ENCODE measurements at regions of chr1 and their contacts with region 1.

Region 1: DNA sequence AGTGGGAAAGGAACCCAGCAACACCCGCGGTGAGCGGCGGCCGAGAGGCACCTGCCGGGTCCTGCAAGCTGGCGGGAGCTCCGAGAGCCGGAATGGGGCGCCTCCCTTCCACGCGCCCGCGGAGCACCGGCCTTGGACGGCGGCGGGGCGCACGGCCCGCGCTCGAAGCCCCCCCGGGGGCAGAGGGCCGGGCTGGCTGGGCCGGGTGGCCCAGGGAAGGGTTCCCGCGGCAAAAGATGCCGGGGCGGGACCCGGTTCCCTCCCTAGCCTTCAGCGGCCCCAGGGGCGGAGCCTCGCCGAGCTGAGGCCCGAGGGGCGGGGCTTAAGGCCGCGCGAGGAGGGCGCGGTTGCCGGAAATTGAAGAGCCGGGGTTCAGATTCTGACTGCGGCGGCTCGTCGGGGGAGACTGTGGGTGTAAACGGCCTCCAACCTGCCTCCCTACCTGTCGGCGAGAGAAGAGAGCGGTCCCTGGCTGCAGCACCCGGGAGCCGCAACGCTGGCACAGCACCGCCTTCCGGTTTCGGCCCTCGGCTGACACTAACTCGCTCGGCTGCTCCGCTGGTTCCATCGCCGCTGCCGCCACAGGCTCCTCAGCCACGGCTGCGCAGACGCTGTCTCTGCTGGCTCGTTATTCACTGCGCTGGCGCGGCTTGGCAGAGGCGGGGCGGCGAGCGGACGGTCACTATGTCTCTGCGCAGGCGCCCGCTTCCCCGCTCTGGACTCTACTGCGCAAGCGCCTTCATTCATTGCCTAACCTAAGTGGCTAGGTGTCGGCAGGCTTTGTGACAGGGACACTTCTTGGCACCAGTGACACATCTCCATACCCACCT is at the start of gene RABIF:
- H3K4me3 ChIP-seq: peak within 1 kb of the TSS; percentile 89
- H3K27ac ChIP-seq: peak within 1 kb of the TSS; percentile 79
- H3K4me1 ChIP-seq: no peaks in the 10 kb centered on the region
- CTCF ChIP-seq: peak; percentile 83

Region 2: DNA sequence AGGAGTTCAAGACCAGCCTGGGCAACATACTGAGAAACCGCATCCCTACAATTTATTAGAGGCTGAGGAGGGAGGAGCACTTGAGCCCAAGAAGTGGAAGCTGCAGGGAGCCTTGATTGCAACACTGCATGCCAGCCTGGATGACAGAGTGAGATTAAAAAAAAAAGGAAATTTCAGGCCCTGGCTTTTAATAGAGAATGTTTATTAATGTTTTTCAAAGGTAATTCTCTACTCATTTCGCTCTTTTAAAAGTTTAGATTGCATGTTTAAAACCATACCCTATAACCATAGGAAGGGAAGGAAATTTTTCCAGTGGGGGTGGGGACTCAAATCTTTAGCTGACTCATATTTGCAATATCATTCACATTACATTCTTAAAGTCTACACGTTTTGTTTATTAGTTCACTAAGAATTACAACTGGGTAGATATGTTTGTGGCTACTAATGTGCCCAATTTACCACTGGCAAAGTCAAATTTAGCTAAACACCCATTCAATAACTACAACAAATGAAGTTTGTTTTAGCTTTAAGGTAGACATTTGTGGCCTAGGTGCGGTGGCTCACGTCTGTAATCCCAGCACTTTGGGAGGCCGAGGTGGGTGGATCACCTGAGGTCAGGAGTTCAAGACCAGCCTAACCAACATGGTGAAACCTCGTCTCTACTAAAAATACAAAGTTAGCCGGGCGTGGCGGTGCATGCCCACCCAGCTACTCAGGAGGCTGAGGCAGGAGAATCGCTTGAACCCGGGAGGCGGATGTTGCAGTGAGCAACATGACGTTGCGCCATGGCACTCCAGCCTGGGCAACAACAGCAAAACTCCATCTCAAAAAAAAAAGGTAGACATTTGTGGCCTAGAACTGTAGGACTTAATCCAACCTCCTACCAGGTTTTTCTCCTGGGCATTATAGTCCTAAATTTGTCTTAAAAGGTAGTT is 85.5 kb before region 1 on chr1:
- CTCF ChIA-PET with region 1: no interaction called
- POLR2A ChIA-PET with region 1: no interaction called
- H3K4me3 ChIP-seq: no peak overlapping the region
- H3K27ac ChIP-seq: no peak overlapping the region
- H3K4me1 ChIP-seq: peaks cover 7% of the 10 kb centered on the region; the same call in 1 of the 2 replicates
- CTCF ChIP-seq: no peak

Region 3: GRCh38 chr1:202861420-202862200 is 27.1 kb before region 1 on chr1:
- CTCF ChIA-PET with region 1: no interaction called
- POLR2A ChIA-PET with region 1: interaction called, 15 read pairs
- H3K4me3 ChIP-seq: peak overlapping the region; percentile 68
- H3K27ac ChIP-seq: peak overlapping the region; percentile 57; the same call in 1 of the 2 replicates
- H3K4me1 ChIP-seq: peaks cover 3% of the 10 kb centered on the region
- CTCF ChIP-seq: no peak